Caco-2 (cell line): ENCODE measurements at regions of chr4 and their contacts with region 1.

Region 1: DNA sequence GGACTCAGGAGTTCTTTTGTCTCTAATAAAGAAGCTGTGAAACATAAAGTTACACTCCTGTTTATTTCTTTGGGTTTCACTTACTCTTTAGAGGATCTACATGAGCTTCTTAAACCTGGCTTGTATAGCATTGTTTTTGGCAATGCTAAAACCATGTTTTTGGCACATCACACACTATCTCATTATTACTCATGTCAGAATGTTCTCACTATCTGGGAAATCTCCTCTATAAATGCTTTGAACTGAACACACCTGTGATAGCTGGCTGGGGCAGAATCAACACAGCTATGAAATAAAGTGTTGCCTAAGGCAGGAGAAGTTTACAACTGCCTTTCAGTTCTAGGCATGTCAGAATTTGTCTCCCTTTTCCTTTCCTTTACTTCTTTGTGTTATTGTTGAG is 52.6 kb downstream of the SULT1B1 start:
- DNase-seq: no peak
- H3K4me3 ChIP-seq: no peak overlapping the region
- H3K4me3 Mint-ChIP-seq: no peak overlapping the region
- H3K27ac Mint-ChIP-seq: no peak overlapping the region
- H3K4me1 ChIP-seq: peaks cover 5% of the 10 kb centered on the region
- H3K4me1 Mint-ChIP-seq: peaks cover 9% of the 10 kb centered on the region
- H3K27me3 ChIP-seq: no peaks in the 10 kb centered on the region
- H3K27me3 Mint-ChIP-seq: no peaks in the 10 kb centered on the region
- CTCF ChIP-seq: no peak

Region 2: DNA sequence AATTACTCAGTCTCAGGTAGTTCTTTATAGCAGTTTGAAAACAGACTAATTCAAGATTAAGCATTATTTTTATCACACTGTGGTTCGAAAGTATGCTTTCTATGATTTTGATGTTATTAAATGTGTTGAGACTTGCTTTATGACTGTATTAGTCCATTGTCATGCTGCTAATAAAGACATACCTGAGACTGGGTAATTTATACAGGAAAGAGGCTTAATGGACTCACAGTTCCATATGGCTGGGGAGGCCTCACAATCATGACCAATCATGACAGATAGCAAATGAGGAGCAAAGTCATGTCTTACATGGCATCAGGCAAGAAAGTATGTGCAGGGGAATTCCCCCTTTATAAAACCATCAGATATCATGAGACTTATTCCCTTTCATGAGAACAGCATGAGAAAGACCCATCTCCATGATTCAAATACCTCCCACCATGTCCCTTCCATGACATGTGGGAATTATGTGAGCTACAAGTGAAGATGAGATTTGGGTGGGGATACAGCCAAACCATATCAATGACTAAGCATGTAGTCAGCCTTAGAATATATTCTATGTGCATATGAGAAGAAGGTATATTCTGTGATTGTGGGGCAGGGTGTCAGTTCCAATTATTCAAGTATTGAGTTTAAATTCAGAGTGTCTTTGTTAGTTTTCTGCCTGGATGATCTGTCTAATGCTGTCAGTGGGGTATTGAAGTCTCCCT is 10.1 kb before region 1 on chr4:
- CTCF ChIA-PET with region 1: no interaction called
- POLR2A ChIA-PET with region 1: no interaction called
- intact Hi-C with region 1: no loop called
- DNase-seq: no peak
- H3K4me3 ChIP-seq: no peak overlapping the region
- H3K4me3 Mint-ChIP-seq: no peak overlapping the region
- H3K27ac Mint-ChIP-seq: no peak overlapping the region
- H3K4me1 ChIP-seq: no peaks in the 10 kb centered on the region
- H3K4me1 Mint-ChIP-seq: no peaks in the 10 kb centered on the region
- H3K27me3 ChIP-seq: no peaks in the 10 kb centered on the region
- H3K27me3 Mint-ChIP-seq: no peaks in the 10 kb centered on the region
- CTCF ChIP-seq: no peak

Region 3: GRCh38 chr4:69773484-69773883 is 65.7 kb after region 1 on chr4:
- CTCF ChIA-PET with region 1: no interaction called
- POLR2A ChIA-PET with region 1: no interaction called
- intact Hi-C with region 1: loop called (anchors 10 kb)
- DNase-seq: no peak
- H3K4me3 ChIP-seq: no peak overlapping the region
- H3K4me3 Mint-ChIP-seq: no peak overlapping the region
- H3K27ac Mint-ChIP-seq: no peak overlapping the region
- H3K4me1 ChIP-seq: peaks cover 36% of the 10 kb centered on the region
- H3K4me1 Mint-ChIP-seq: peaks cover 7% of the 10 kb centered on the region
- H3K27me3 ChIP-seq: no peaks in the 10 kb centered on the region
- H3K27me3 Mint-ChIP-seq: no peaks in the 10 kb centered on the region
- CTCF ChIP-seq: no peak